ENCODE measurements at regions of chr18 and their contacts with region 1.

Region 1: DNA sequence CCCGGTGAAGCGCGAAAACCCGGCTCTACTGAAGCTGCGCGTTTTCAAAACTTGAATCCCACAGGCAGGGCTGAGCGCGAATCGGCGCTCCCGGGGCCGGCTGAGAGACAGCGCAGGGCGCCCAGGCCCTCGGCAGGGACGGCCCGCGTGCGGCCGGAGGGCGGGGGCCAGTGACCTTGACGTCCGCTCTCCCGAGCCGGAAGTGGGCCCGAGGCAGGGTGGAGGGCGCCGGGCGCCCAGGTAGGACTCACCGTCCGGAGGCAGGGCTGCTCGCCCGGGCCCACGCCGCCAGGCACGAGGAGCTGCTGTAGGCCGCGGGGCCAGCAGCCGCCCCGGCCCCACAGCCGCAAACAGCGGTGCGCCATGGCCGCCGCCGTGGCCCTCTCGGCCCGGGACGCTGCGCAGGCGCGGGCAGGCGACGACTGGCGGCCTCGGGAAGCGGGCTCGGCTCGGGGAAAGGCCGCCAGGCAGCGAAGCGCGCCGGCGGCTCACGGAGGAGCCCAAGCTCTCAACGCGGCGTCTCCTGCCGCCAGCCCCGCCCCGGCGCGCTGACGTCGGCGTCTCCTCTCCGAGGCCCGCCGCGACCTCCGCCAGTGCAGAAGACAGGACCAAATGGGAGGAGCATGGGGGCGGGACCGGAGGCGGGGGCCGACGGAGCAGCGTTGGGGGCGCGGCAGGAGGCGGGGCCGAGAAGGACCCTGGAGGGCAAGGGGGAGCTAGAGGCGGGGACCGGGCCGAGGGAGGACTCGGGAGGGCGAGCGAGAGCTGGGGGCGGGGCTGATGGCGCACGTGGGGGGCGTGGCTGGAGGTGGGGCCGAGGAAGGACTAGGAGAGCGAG is at the start of gene AFG3L2:
- DNase-seq: peak; percentile 100
- H3K4me3 ChIP-seq: peak within 1 kb of the TSS; percentile 56 to 96 (median 77)
- H3K27ac ChIP-seq: peak within 1 kb of the TSS; percentile 94 to 100 (median 100)
- H3K4me1 ChIP-seq: peaks cover 0 to 52% (median 39%) of the 10 kb centered on the region in 4 donors
- H3K27me3 ChIP-seq: no peaks in the 10 kb centered on the region
- CTCF ChIP-seq: no peak
- EP300 ChIP-seq: no peak
- POLR2A ChIP-seq: peak; percentile 23 to 36
- total RNA-seq, gene AFG3L2: 31.4 to 43.7 (median 38.2) TPM

Region 2: DNA sequence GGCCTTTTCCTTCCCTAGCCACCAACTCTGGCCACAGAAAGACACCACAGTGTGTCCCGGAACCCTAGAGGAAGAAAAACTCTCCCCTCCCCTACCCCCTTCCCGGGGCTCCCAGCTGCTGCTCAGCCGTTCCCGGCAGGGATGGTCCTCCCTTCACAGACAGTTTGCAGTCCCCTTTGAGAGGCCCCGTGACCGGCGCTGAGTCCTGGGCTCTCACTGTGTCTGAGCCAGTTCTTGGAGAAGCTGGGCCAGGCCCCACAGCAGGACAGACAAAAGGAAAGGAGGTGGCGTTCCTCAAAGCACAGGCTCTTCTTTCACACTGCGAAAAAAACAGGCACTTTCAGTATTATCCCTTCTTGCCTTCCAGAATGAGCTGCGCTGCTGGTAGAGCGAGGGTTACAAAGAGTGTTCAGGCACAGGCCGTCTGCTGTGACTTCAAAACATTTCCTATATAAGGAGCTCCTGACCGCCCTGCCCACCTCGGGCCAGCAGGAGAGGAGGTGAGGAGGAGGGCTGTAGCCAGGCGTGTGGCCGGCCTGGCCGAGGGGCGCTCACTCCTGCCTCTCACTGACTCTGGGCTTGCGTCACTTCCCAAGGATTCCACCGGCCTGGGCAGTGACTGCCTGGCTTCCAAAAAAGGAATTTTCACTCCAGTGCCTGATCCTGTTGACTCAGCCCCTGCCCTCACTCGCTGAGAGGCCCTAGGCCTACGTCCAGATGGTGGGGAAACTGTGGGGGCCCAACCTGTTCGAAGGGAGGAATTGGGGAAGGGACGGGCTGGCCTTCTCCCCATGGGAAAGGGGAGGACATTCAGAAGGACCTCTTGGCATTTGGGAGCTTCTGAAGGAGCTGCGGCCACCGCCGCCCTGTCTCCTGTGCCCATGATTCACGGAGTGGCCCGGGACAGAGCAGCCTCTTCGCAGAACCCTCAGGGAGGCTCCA is 97.9 kb before region 1 on chr18:
- intact Hi-C with region 1: loop called (anchors 2 kb)
- DNase-seq: peak; percentile 98
- H3K4me3 ChIP-seq: peak overlapping the region; percentile 42 to 56 (median 50)
- H3K27ac ChIP-seq: peak overlapping the region; percentile 92 to 99 (median 96)
- H3K4me1 ChIP-seq: peaks cover 0 to 58% (median 52%) of the 10 kb centered on the region in 4 donors
- H3K27me3 ChIP-seq: no peaks in the 10 kb centered on the region
- CTCF ChIP-seq: peak in 3 of 4 experiments; percentile 7 to 20 (median 17)
- EP300 ChIP-seq: peak in 3 of 4 donors; percentile 49 to 93 (median 67)
- POLR2A ChIP-seq: peak; percentile 80 to 87

Region 3: DNA sequence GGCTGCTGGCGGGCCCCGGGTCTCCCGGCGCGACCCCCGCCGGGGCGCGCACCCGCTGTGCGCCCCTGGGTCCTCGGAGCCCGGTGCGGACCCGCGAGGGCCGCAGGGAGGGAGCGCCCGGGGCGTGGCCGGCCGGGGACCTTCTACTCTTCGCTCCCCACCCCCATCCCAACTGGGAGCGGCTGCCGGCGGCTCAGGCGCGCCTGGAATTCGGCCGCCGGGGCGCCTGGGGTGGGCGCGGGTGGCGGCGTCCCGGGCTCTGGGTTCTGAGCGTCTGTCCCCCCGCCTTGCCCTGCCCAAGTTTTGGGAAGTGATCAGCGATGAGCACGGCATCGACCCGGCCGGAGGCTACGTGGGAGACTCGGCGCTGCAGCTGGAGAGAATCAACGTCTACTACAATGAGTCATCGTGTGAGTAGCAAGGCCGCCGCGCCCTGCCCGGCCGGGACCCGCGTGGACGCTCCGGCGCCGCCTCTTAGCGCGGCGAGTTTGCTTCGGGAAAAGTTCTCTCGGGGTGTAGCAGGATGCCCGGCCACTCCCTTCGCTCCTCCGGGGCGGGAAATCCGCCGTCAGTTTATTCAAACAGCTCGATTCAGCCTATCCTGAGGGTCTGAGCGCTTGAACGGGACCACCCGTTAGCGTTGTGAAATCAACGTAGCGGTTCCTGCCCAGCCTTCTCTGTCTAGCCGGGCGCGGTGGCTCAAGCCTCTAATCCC is 68.4 kb before region 1 on chr18:
- intact Hi-C with region 1: loop called (anchors 1 kb)
- DNase-seq: peak; percentile 95
- H3K4me3 ChIP-seq: peak overlapping the region; percentile 62 to 100 (median 90)
- H3K27ac ChIP-seq: peak overlapping the region; percentile 94 to 100 (median 99)
- H3K4me1 ChIP-seq: peaks cover 0 to 56% (median 53%) of the 10 kb centered on the region in 4 donors
- H3K27me3 ChIP-seq: no peaks in the 10 kb centered on the region
- CTCF ChIP-seq: no peak
- EP300 ChIP-seq: no peak
- POLR2A ChIP-seq: peak; percentile 44 to 76

Region 4: DNA sequence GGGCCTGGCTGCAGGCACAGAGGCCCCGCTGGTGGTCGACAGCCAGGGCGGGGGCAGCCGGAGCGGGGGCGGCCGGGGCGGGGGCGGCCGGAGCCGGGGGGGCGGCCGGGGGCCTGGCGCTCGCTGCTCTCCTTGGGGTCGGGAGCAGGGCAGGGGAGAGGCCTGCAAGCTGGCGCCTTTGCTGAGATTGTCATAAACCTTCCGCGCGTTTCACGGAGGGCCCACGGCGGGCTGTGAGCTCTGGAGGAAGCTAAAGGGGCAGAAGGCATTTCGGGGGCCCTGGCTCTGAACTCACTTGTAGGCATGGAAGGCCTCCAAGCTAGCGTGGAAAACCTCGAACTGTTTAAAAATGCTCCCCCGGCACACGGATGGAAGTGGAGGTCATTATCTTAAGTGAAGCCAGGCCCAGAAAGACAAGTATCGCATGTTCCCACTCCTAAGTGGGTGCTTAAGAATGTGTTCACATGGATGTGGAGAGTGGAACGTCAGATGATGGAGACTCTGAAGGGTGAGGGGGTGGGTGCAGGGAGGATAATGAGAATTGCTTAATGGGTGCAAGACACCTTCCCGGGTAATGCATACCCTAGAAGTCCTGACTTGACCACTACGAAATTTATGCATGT is 31.4 kb after region 1 on chr18:
- intact Hi-C with region 1: loop called (anchors 1 kb)
- DNase-seq: no peak
- H3K4me3 ChIP-seq: peak overlapping the region; percentile 49 to 71 (median 64)
- H3K27ac ChIP-seq: peak overlapping the region; percentile 86 to 93 (median 92)
- H3K4me1 ChIP-seq: peaks cover 0 to 28% (median 16%) of the 10 kb centered on the region in 4 donors
- H3K27me3 ChIP-seq: no peaks in the 10 kb centered on the region
- CTCF ChIP-seq: no peak
- EP300 ChIP-seq: no peak
- POLR2A ChIP-seq: no peak

Region 5: DNA sequence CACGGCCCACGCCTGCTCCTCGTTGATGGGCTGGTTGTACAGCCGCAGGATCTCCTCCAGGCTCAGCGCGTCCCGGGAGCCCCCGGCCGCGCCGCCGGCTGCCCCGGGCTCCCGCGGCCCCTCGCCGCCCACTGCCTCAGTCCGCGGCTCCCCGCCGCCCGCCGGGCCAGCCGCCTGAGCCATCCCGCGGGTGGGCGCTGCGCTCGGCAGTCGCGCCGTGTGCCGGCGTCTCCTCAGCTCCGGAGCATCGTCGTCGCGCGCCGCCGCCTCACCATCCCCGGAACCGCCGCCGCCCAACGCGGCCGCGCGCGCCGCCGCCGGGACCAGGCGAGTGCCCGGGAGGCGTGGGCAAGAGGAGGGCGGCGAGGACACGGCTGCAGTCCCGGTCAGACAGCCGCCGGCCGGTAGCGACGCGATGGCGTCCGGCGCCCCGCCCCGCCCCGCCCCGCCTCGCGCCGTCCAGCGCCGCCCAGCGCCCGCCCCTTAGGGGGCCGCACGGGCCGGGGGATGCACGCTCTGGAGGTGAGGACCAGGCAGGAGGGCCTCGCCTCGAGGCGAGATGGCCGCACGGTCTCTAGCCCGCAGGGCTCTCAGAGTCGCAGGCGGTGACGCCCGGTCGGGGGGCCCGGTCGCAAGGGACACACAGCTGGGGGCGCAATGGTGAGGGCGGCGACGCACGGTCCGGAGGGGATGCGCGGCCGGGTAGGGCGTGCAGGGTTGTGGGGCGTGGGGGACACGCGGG is 280.9 kb after region 1 on chr18 and contains the start of gene SPIRE1:
- intact Hi-C with region 1: loop called (anchors 5 kb)
- DNase-seq: peak; percentile 86
- H3K4me3 ChIP-seq: peak within 1 kb of the TSS; percentile 72 to 92 (median 82)
- H3K27ac ChIP-seq: peak within 1 kb of the TSS; percentile 98
- H3K4me1 ChIP-seq: peaks cover 0 to 25% (median 12%) of the 10 kb centered on the region in 4 donors
- H3K27me3 ChIP-seq: no peaks in the 10 kb centered on the region
- CTCF ChIP-seq: no peak
- EP300 ChIP-seq: no peak
- POLR2A ChIP-seq: no peak
- total RNA-seq, gene SPIRE1: 22.7 to 31.6 (median 24.8) TPM

Region 6: DNA sequence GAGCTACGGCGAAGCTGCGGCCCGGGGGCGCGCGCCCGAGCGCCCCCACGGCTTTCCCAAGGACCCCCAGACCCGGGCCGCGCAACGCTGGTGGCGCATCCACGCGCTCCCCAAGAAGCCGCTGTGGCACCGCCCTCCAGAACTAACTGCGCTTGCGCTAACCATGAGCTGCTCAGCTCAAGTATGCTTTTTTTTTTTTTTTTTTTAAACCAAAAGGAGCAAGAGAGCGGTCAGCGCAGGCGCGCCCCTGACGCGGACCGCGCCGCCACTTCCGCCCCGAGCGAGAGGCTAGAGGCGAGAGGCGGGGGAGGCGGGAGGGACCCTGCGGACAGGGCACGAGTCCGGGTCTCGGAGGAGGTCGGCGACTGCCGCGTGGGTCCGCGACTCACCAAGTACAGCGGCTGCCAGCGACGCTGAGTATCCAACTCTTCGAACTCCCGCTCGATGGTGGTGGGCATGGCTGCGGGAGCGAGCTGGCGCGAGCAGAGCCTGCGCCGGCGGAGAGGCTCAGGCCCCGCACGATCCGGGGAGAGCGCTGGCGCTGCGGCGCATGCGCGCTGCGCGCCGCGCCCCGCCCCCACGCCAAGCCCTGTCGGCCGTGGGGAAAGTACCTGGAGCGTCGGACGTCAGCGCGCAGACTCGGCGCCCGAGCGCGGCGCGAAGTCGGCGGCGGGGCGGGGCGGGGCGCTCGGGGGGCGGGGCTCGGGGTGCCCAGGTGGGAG is 506.9 kb after region 1 on chr18 and contains the start of gene PTPN2:
- intact Hi-C with region 1: loop called (anchors 5 kb)
- DNase-seq: peak; percentile 98
- H3K4me3 ChIP-seq: peak within 1 kb of the TSS; percentile 68 to 87 (median 77)
- H3K27ac ChIP-seq: peak within 1 kb of the TSS; percentile 95 to 100 (median 98)
- H3K4me1 ChIP-seq: peaks cover 0 to 26% (median 15%) of the 10 kb centered on the region in 4 donors
- H3K27me3 ChIP-seq: no peaks in the 10 kb centered on the region
- CTCF ChIP-seq: no peak
- EP300 ChIP-seq: peak in 1 of 4 donors; percentile 9
- POLR2A ChIP-seq: peak; percentile 82 to 85
- total RNA-seq, gene PTPN2: 20.0 to 31.0 (median 21.0) TPM

Region 7: GRCh38 chr18:12947355-12948041 is 570.6 kb after region 1 on chr18 and contains the start of gene SEH1L:
- intact Hi-C with region 1: loop called (anchors 1 kb)
- DNase-seq: peak; percentile 100
- H3K4me3 ChIP-seq: peak within 1 kb of the TSS; percentile 55 to 72 (median 64)
- H3K27ac ChIP-seq: peak within 1 kb of the TSS; percentile 94 to 99 (median 98)
- H3K4me1 ChIP-seq: peaks cover 0 to 24% (median 16%) of the 10 kb centered on the region in 4 donors
- H3K27me3 ChIP-seq: no peaks in the 10 kb centered on the region
- CTCF ChIP-seq: no peak
- EP300 ChIP-seq: no peak
- POLR2A ChIP-seq: peak; percentile 52 to 56
- total RNA-seq, gene SEH1L: 15.3 to 38.1 (median 20.3) TPM